ENCODE measurements at regions of chr2 and their contacts with region 1.

Region 1: GRCh38 chr2:27428213-27428977 is at the start of gene NRBP1:
- DNase-seq: peak; percentile 94
- ATAC-seq: peak; percentile 84
- H3K4me3 ChIP-seq: peak within 1 kb of the TSS; percentile 85
- H3K27ac ChIP-seq: peak within 1 kb of the TSS; percentile 33
- H3K4me1 ChIP-seq: peaks cover 19% of the 10 kb centered on the region
- H3K27me3 ChIP-seq: no peaks in the 10 kb centered on the region
- CTCF ChIP-seq: peak; percentile 45
- total RNA-seq, gene NRBP1: 66.6 and 69.3 TPM in 2 replicates

Region 2: DNA sequence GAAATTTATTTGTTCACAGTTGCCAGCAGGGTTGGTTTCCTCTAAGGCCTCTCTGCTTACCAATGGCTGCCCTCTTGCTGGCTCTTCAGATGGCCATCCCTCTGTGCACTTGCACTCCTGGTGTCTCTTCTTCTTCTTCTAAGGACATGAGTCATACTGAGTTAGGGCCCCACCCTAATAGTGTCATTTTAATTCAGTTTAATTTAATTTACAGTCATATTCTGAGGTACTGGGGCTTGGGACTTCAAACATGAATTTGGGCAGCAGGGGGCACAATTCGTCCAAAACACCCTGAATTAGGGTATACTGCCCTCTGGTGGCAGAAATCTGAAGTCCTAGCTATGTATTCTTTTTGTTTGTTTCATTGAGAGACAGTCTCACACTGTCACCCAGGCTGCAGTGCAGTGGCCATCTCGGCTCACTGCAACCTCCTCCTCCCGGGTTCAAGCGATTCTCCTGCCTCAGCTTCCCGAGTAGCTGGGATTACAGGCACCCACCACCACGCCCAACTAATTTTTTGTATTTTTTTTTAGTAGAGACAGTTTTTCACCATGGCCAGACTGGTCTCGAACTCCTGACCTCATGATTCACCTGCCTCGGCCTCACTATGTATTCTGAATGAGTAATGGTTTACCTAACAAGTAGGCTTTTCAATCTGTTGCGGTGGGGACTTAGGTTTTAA is 255.1 kb after region 1 on chr2:
- CTCF ChIA-PET with region 1: no interaction called
- POLR2A ChIA-PET with region 1: no interaction called
- intact Hi-C with region 1: loop called (anchors 1 kb)
- DNase-seq: peak; percentile 98
- ATAC-seq: peak; percentile 82
- H3K4me3 ChIP-seq: no peak overlapping the region
- H3K27ac ChIP-seq: peak overlapping the region; percentile 79
- H3K4me1 ChIP-seq: peaks cover 29% of the 10 kb centered on the region
- H3K27me3 ChIP-seq: no peaks in the 10 kb centered on the region
- CTCF ChIP-seq: peak; percentile 99